GM10248 (cell line): ENCODE measurements at regions of chr19 and their contacts with region 1.

Region 1: GRCh38 chr19:45643024-45643926 is 4.1 kb upstream of the EML2 start:
- DNase-seq: peak; percentile 85
- CTCF ChIP-seq: peak; percentile 99

Region 2: DNA sequence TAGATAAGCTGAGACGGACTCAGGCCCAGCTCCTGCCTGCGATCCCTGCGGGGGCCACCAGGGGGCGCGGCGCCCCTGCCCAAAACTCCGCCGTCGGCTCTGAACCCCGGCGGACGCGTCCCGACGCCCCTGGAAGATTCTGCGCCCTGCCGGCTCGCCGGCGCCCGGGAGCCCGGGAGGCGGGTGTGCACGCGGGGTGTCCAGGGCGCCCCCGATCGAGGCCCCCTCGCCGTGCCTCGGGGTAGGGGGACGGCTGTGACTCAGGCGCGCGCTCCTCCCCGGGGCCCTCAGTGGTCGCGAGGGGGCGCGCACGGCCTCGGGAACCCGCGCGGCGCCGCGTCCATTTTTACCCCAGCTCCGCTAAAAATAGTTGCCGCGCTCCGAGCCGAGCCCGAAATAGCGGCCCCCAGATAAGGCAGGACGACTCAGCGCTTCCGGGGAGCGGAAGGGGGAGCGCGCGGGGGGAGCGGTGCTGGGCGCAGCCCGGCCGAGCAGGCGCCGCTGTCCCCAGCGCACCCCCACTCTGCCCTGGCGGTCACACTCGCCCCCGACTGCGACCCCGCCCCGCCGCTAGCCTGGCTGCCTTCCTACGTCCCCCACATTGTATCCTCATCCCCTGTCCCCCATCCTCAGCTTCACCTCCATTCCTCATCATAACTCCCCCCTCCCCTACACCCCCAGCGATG is 203.6 kb before region 1 on chr19:
- CTCF ChIA-PET with region 1: interaction called, 16 read pairs
- POLR2A ChIA-PET with region 1: no interaction called
- DNase-seq: peak; percentile 86
- CTCF ChIP-seq: peak; percentile 89

Region 3: DNA sequence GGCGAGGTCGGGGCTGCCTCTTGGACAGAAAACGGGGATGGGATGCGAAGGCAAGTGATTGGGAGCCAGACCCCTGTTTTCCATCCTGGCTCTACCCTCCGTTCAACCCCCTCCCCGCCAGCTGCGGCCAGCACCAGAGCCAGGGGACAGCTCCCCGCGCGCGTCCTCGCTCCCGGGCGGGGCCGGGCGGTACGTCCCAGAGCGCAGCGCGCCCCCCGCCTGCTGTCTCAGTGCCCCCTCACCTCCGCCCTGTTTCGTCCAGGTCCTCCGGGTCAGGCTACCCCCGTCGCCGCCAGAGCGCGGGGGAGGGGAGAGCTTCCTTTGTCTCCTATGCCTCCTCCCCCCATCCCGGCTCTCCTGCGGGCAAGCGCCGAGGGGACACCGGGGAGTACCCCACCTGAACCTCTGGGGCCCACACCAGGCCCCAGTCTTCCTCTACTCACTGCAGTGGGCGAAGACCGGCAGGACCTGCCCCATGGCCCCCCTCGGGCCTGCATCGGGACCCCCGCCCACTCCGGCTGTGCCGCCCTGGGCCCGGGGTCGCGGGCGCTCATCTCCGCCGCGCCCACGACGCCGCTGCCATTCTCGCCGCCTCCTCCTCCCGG is 146.8 kb before region 1 on chr19:
- CTCF ChIA-PET with region 1: interaction called, 19 read pairs
- POLR2A ChIA-PET with region 1: no interaction called
- DNase-seq: peak; percentile 48
- CTCF ChIP-seq: no peak

Region 4: DNA sequence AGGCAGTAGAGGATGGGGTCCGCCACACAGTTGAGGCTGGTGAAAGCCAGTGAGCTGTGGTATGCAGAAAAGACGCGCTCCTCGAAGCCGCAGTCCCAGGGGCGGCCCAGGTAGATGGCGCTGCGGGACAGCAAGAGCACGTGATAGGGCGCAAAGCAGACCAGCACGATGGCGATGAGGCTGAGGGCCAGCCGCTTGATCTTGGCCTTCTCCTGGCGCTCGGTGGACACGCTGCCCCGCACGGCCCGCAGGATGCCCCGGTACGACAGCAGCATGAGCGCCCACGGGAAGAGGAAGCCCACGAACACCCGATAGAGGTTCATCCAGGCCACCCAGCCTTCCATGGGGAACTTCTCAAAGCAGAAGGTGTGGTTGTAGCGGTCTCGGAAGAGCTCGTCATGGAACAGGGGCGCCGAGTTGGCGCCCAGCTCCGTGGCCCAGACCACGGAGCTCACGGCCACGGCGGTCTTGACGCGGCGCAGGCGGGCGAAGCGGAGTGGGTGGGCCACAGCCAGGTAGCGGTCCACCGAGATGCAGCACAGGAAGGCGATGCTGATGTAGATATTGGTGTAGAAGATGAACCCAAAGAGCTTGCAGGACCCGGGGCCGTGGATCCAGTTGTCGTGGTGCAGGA is 52.2 kb before region 1 on chr19:
- CTCF ChIA-PET with region 1: interaction called, 16 read pairs
- POLR2A ChIA-PET with region 1: no interaction called
- DNase-seq: peak; percentile 44
- CTCF ChIP-seq: peak; percentile 58

Region 5: DNA sequence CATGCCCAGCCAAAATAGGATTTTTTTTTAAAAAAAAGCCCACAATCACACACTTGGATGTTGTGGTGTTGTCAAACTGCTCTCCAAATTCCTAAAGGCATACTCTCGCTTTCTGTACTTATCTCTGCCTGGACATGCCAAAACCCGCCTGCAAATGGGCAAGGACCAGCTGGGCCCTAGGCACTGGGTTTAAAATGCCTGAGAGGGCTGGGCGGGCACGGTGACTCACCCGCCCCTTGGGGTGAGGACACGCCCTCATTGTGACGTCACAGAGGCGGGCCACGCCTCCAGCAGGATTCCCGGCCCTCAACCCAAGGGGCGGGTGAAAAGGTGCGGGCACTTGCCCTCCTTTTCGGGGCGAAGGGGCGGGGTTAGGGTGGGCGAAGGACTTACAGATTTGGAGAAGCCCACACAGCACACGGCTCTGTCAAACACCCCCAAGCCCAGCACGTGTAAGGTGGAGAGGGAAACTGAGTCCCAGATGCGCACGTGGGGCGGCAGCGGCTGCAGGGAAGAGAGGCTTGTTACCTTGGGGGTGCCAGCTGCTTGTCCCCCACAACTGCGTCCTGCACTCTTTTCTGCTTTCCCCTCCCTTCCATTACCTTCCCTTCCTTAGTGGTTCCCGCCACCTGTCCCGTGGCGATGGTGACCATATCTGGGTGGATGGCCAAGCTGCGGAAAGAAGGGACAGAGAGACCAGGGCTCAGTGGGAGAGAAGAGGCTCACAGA is 10.6 kb before region 1 on chr19:
- CTCF ChIA-PET with region 1: interaction called, 43 read pairs
- POLR2A ChIA-PET with region 1: interaction called, 7 read pairs
- DNase-seq: peak; percentile 65
- CTCF ChIP-seq: no peak

Region 6: GRCh38 chr19:45692187-45693105 is 49.2 kb after region 1 on chr19 and contains the start of gene QPCTL:
- CTCF ChIA-PET with region 1: interaction called, 13 read pairs
- POLR2A ChIA-PET with region 1: no interaction called
- DNase-seq: peak; percentile 95
- CTCF ChIP-seq: no peak

Region 7: DNA sequence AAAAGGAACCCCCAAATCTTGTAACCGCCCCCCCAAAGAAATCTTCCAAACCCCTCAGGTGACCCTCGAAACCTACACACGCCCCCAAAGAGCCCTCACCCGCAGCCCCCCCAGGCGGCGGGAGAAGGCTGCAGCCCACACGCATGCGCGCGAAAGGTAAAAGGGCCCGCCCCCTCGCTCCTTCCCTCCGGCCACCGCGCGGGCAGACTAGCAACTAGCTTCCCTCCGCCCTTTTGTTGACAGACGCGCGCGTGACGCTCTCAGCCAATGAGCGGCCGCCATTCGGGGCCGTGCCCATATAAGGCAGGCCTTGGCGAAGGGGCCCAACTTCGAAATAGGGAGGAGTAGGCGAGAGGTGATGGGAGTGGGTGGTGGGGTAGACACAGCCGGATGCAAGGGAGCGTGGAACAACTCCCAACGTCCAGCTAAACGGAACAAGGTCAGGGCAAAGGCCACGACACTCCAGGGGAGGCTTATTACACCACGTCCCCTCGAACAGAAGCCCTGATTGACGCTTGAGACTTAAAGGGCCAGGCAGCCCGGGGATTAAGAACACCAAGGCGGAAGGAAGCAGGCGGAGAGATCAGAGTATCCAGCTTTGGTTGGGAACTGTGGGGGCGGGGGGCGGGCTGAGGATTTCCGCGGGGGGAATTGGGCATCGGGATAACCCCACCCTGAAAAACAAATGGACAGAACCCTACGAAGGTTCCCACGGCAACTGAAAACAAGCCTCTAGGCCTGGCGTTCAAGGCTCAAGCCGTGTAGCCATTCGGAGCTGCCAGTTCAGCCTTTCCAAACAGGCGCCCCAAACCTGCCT is 74.1 kb after region 1 on chr19:
- CTCF ChIA-PET with region 1: no interaction called
- POLR2A ChIA-PET with region 1: no interaction called
- DNase-seq: peak; percentile 98
- CTCF ChIP-seq: peak; percentile 11

Region 8: GRCh38 chr19:45798995-45799517 is 155.8 kb after region 1 on chr19:
- CTCF ChIA-PET with region 1: no interaction called
- POLR2A ChIA-PET with region 1: no interaction called
- DNase-seq: peak; percentile 81
- CTCF ChIP-seq: peak; percentile 72